SK-N-SH (cell line): ENCODE measurements at regions of chr3 and their contacts with region 1.

Region 1: GRCh38 chr3:30768703-30769685 is 125.5 kb downstream of the GADL1 start:
- DNase-seq: peak; percentile 49
- H3K4me3 ChIP-seq: peak overlapping the region in 1 of 2 experiments; percentile 30; a peak in 1 of 4 replicates
- H3K27ac ChIP-seq: no peak overlapping the region
- H3K4me1 ChIP-seq: peaks cover 0 to 5% of the 10 kb centered on the region in 2 experiments; a peak in 1 of 4 replicates
- H3K27me3 ChIP-seq: no peaks in the 10 kb centered on the region
- CTCF ChIP-seq: peak; percentile 95
- EP300 ChIP-seq: no peak
- RAD21 ChIP-seq: peak; percentile 86

Region 2: DNA sequence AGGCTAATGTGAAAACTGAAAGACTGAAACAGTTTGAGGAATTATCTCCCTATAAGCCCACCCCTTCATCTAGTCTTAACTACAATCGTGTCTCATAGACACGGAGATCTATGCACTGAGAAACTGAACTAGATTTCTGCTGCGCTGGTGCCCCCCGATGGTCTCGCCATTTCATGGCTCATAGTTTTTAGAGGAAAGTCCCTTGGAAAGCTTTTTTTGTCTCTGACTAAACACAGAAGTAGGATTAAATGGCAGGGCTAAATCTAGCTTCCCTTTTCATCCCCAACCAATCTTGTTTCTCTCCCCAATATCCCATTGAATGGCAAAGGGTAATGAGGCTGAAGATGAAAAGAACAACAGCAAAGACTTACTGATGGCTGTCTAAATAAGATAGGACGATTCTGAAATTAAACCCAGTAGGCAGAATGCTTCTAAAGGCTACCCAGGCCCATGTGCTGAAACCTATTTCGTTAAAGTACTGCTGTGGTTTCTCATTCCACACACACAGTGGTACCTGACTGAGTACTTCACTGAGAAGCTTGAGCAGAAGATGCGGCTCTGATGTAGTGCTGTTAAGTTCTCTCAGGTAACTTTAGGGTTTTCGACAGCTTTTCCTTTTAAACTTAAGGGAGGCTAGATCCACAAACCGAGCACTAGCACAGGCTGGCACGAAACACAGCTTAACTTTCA is 17.2 kb before region 1 on chr3:
- CTCF ChIA-PET with region 1: interaction called, 38 read pairs
- POLR2A ChIA-PET with region 1: interaction called, 3 read pairs
- DNase-seq: peak; percentile 24
- H3K4me3 ChIP-seq: no peak overlapping the region
- H3K27ac ChIP-seq: no peak overlapping the region
- H3K4me1 ChIP-seq: peaks cover 0 to 29% of the 10 kb centered on the region in 2 experiments; a peak in 2 of 4 replicates
- H3K27me3 ChIP-seq: no peaks in the 10 kb centered on the region
- CTCF ChIP-seq: peak; percentile 69
- EP300 ChIP-seq: no peak
- RAD21 ChIP-seq: peak; percentile 84

Region 3: DNA sequence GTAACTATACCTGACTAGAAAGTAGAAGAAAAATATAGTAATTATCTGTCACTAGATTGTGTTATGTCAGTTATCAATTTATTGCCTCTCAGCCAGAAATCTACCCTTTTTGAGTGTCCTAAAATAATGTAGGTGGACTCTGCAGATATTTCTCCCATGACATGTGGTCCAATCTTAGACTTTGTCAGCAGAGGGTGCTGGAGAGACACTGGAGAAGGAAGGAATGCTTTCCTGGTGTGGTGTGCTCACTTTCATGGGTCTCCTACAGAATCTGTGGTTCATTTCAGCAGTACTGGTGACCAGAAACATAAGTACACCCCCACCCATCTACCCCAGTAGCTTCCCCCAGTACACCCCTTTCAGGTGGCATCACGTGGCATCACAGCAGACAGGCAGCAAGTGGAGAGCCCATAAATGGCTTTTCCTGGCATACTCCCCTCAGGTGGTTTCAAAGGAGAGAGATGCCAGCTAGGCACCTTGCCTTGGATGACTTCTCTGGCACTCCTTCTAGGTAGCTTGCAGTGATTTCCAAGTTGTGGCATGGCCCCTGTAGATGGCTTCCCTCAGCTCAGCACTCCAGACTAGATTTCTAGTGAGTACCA is 10.8 kb after region 1 on chr3:
- CTCF ChIA-PET with region 1: interaction called, 21 read pairs
- POLR2A ChIA-PET with region 1: no interaction called
- DNase-seq: peak; percentile 9
- H3K4me3 ChIP-seq: no peak overlapping the region
- H3K27ac ChIP-seq: no peak overlapping the region
- H3K4me1 ChIP-seq: no peaks in the 10 kb centered on the region
- H3K27me3 ChIP-seq: peaks cover 2% of the 10 kb centered on the region; the same call in 1 of the 2 replicates
- CTCF ChIP-seq: peak; percentile 50
- EP300 ChIP-seq: no peak
- RAD21 ChIP-seq: peak; percentile 56

Region 4: DNA sequence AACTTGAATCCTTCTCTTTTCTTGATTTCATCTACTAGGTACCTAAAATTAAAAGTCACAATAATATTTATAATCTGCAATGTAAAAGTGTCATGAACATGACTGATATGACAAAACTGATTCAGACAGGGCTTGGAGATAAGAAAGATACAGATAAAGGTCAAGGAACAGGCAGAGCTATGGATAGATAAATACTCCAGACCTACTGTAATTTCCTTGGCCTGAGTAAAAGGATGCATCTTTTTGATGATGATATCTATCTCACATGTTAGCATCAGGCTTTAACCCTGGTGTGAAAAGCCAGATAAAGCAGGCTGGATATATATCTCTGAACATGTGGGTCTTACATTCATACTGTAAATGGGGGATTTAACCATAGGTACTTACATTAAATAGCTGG is 17.4 kb after region 1 on chr3:
- CTCF ChIA-PET with region 1: interaction called, 21 read pairs
- POLR2A ChIA-PET with region 1: no interaction called
- DNase-seq: peak; percentile 1
- H3K4me3 ChIP-seq: no peak overlapping the region
- H3K27ac ChIP-seq: no peak overlapping the region
- H3K4me1 ChIP-seq: peaks cover 0 to 2% of the 10 kb centered on the region in 2 experiments; a peak in 1 of 4 replicates
- H3K27me3 ChIP-seq: peaks cover 4% of the 10 kb centered on the region; the same call in 1 of the 2 replicates
- CTCF ChIP-seq: no peak
- EP300 ChIP-seq: peak in 1 of 2 experiments; percentile 30; a peak in 1 of 4 replicates
- RAD21 ChIP-seq: no peak

Region 5: DNA sequence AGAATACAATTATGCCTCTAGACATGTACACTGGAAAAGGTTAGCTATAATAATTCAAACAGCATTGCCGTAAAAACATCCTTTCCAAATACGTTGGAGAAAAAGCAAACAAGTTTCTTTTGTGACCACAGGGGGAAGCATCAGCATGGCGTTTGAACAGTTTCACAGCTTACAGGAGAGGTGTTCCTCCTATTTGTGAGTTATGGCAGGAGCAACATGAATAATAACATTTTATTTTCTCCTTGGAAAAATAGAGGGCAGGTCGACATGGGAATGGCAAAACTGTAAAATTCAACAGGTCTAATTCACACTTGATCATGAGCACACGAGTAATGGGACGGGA is 165.2 kb after region 1 on chr3:
- CTCF ChIA-PET with region 1: interaction called, 10 read pairs
- POLR2A ChIA-PET with region 1: no interaction called
- DNase-seq: peak; percentile 14
- H3K4me3 ChIP-seq: no peak overlapping the region
- H3K27ac ChIP-seq: no peak overlapping the region
- H3K4me1 ChIP-seq: no peaks in the 10 kb centered on the region
- H3K27me3 ChIP-seq: no peaks in the 10 kb centered on the region
- CTCF ChIP-seq: peak; percentile 47
- EP300 ChIP-seq: no peak
- RAD21 ChIP-seq: peak; percentile 77

Region 6: DNA sequence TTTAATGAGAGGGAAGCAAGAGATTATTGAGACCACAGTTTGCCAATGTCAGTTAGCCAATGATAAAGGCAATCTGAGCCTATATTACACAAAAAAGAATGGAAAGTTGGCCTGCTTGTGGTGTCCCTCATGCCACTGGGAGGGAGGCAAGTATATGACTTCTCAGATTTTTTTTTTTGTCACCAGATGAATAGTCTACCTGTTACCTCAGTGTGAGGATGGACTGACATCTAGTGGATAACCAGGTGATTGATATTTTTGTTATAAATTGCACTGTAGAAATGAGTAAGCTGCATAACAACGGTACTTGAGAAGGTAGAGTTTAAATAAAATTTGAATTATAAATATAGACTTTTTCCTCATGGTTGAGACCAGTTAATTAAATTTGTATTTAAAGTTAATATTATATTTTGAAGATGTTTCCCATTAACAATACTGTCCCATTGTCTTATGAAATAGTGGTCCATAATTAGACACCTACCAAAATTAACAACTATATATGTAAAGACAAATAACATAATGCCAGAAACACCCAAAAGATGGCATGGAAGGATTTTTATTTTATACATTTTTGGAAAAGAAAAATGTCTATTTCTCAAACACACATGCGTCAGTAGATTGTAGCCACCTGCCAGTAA is 363.3 kb after region 1 on chr3:
- CTCF ChIA-PET with region 1: interaction called, 25 read pairs
- POLR2A ChIA-PET with region 1: no interaction called
- DNase-seq: peak; percentile 17
- H3K4me3 ChIP-seq: no peak overlapping the region
- H3K27ac ChIP-seq: no peak overlapping the region
- H3K4me1 ChIP-seq: no peaks in the 10 kb centered on the region
- H3K27me3 ChIP-seq: no peaks in the 10 kb centered on the region
- CTCF ChIP-seq: peak; percentile 73
- EP300 ChIP-seq: no peak
- RAD21 ChIP-seq: peak; percentile 85

Region 7: GRCh38 chr3:31341130-31341529 is 572.1 kb after region 1 on chr3:
- CTCF ChIA-PET with region 1: no interaction called
- POLR2A ChIA-PET with region 1: no interaction called
- DNase-seq: peak; percentile 2
- H3K4me3 ChIP-seq: no peak overlapping the region
- H3K27ac ChIP-seq: no peak overlapping the region
- H3K4me1 ChIP-seq: no peaks in the 10 kb centered on the region; a peak in 2 of 4 replicates
- H3K27me3 ChIP-seq: no peaks in the 10 kb centered on the region
- CTCF ChIP-seq: peak; percentile 9; the same call in 1 of the 2 replicates
- EP300 ChIP-seq: no peak
- RAD21 ChIP-seq: peak; percentile 51